Prostate gland (tissue), 2 donors: ENCODE measurements at regions of chr3 and their contacts with region 1.

Region 1: GRCh38 chr3:152268555-152269425 is at the start of gene MBNL1:
- DNase-seq: peak; percentile 79
- H3K4me3 ChIP-seq: peak within 1 kb of the TSS; percentile 83 to 86
- H3K27ac ChIP-seq: peak within 1 kb of the TSS; percentile 97 to 98
- H3K4me1 ChIP-seq: peaks cover 3% of the 10 kb centered on the region
- H3K27me3 ChIP-seq: no peaks in the 10 kb centered on the region
- CTCF ChIP-seq: no peak
- POLR2A ChIP-seq: peak; percentile 48
- total RNA-seq, gene MBNL1: 131 to 226 TPM

Region 2: GRCh38 chr3:152071924-152072323 is 196.9 kb before region 1 on chr3:
- intact Hi-C with region 1: loop called (anchors 10 kb)
- DNase-seq: no peak
- H3K4me3 ChIP-seq: no peak overlapping the region
- H3K27ac ChIP-seq: no peak overlapping the region
- H3K4me1 ChIP-seq: no peaks in the 10 kb centered on the region
- H3K27me3 ChIP-seq: no peaks in the 10 kb centered on the region
- CTCF ChIP-seq: peak in 3 of 4 experiments; percentile 28 to 49 (median 37)
- POLR2A ChIP-seq: no peak

Region 3: DNA sequence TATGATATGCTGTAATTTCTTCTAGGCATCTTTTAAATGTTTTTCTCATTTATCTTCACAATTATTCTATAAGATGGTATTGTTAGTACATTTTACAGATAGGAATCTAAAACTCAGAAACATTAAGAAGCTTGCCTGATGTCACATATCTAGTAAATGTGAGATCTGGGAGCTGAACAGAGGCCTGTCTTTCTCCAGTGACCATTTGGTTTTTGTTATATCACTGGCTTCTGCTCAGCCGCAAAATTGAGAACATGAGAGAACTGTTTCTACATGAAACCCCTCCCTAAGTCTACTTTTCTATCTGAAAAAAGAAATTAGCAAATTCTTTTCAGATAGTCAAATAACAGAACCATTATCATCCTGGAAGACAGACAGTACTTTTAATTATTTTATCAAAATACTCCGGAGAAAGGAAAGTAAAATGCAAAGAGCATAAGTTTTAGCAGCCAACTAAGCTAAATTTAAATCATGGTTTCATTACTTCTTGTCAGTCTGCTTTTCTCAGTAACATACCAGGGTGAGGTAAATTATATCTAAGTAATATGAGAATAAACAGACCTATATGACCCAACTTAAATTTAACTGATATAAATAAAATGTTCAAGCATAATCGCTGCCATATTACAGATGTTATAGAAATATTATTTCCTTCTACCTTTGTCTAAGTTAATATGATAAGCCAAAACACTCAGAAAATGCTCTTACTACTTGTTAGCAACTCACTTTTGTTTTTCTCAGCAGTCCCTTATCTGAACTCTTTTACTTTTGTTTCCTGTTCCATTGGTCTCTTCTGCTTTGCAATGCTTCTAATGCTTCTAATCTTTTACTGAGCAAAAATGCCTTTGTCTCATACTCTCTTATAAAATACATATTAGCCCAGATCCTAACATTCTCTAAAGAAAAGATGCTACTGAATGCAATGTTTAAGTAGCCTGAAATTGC is 68.0 kb before region 1 on chr3:
- intact Hi-C with region 1: loop called (anchors 1 kb)
- DNase-seq: no peak
- H3K4me3 ChIP-seq: no peak overlapping the region
- H3K27ac ChIP-seq: peak overlapping the region; percentile 27 to 52
- H3K4me1 ChIP-seq: no peaks in the 10 kb centered on the region
- H3K27me3 ChIP-seq: no peaks in the 10 kb centered on the region
- CTCF ChIP-seq: no peak
- POLR2A ChIP-seq: no peak

Region 4: DNA sequence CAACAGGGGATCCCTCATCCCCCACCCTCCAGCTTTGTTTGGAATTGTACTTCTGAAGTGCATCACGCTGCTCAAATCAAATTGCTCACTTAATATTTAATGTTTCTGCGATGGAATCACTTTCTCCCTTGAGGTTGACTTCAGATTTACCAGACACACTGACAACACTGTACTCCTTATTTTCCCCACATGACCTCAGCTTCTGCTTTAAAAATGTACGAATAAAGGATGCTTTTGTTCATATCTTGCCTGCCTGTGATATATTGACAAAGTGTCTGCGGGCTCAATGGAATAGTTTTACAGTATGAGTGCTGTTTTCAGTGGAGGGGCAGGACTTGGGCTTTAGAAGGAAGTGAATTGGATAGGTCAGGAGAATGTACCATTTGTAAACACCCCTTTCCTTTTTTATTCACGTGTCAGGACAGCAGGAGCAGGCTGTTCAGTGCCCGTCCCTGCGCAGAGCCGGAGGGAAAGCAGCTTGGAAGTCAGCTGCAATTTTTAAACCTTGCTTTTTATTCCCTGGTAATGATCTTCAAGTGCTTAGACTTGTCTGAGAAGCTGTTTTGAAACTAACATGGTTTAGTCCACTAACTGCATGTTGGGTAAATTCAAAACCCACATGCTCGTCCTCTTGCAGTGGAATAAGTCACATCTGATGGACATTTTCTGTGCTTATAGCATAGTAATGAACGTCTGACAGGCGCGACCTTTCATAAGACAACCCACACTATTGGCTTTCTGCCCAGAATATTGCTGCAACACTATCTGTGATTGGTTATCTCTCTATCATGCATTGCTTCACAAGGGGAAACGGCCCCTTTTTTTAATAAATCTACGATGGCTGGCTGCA is 29.8 kb after region 1 on chr3:
- intact Hi-C with region 1: loop called (anchors 2 kb)
- DNase-seq: peak; percentile 56
- H3K4me3 ChIP-seq: peak overlapping the region; percentile 19 to 20
- H3K27ac ChIP-seq: peak overlapping the region; percentile 64 to 72
- H3K4me1 ChIP-seq: no peaks in the 10 kb centered on the region
- H3K27me3 ChIP-seq: no peaks in the 10 kb centered on the region
- CTCF ChIP-seq: no peak
- POLR2A ChIP-seq: no peak

Region 5: GRCh38 chr3:152405915-152406802 is 137.4 kb after region 1 on chr3:
- intact Hi-C with region 1: loop called (anchors 2 kb)
- DNase-seq: no peak
- H3K4me3 ChIP-seq: no peak overlapping the region
- H3K27ac ChIP-seq: peak overlapping the region; percentile 52 to 55
- H3K4me1 ChIP-seq: peaks cover 4% of the 10 kb centered on the region
- H3K27me3 ChIP-seq: no peaks in the 10 kb centered on the region
- CTCF ChIP-seq: no peak
- POLR2A ChIP-seq: no peak

Region 6: GRCh38 chr3:152444029-152444641 is 175.3 kb after region 1 on chr3:
- intact Hi-C with region 1: loop called (anchors 2 kb)
- DNase-seq: no peak
- H3K4me3 ChIP-seq: no peak overlapping the region
- H3K27ac ChIP-seq: no peak overlapping the region
- H3K4me1 ChIP-seq: no peaks in the 10 kb centered on the region
- H3K27me3 ChIP-seq: no peaks in the 10 kb centered on the region
- CTCF ChIP-seq: peak; percentile 62 to 86 (median 72)
- POLR2A ChIP-seq: no peak

Region 7: GRCh38 chr3:154120961-154121700 is 1852.3 kb after region 1 on chr3 and contains the start of gene ARHGEF26:
- intact Hi-C with region 1: loop called (anchors 10 kb)
- DNase-seq: peak; percentile 92
- H3K4me3 ChIP-seq: peak within 1 kb of the TSS; percentile 55 to 69
- H3K27ac ChIP-seq: peak within 1 kb of the TSS; percentile 55 to 75
- H3K4me1 ChIP-seq: no peaks in the 10 kb centered on the region
- H3K27me3 ChIP-seq: no peaks in the 10 kb centered on the region
- CTCF ChIP-seq: no peak
- POLR2A ChIP-seq: peak; percentile 67
- total RNA-seq, gene ARHGEF26: 15.4 to 26.8 TPM